ENCODE measurements at regions of chr1 and their contacts with region 1.

Region 1: DNA sequence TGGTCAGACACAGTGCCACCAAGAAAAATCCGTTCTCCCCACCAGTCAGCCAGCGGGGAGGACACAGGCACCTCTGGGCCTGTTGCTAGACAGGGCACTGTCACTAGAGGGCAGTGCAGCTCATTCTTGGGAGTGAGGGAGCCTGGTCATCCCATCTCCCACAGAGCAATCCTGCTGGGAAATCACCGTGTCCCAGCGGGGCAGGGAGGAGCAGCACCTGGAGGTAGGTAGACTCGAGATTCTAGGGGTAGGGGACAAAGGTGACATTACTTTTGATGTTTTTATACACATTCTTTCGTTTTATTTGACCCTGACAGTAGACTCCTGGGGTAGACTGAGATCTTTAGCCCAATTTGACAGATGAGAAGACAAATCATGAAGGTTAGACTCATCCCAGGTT is 6.7 kb upstream of the CAMK1G start:
- DNase-seq: peak; percentile 60 to 78
- H3K4me3 ChIP-seq: no peak overlapping the region
- H3K27ac ChIP-seq: no peak overlapping the region
- H3K4me1 ChIP-seq: no peaks in the 10 kb centered on the region
- H3K27me3 ChIP-seq: peaks cover 0 to 11% of the 10 kb centered on the region in 2 donors
- CTCF ChIP-seq: peak; percentile 74 to 91 (median 89)
- POLR2A ChIP-seq: no peak

Region 2: GRCh38 chr1:209307846-209308245 is 269.0 kb before region 1 on chr1:
- intact Hi-C with region 1: no loop called
- DNase-seq: no peak
- H3K4me3 ChIP-seq: no peak overlapping the region
- H3K27ac ChIP-seq: no peak overlapping the region
- H3K4me1 ChIP-seq: no peaks in the 10 kb centered on the region
- H3K27me3 ChIP-seq: peaks cover 0 to 4% of the 10 kb centered on the region in 2 donors
- CTCF ChIP-seq: no peak
- POLR2A ChIP-seq: no peak

Region 3: GRCh38 chr1:209513226-209513625 is 63.6 kb before region 1 on chr1:
- intact Hi-C with region 1: loop called (anchors 2 kb)
- DNase-seq: no peak
- H3K4me3 ChIP-seq: no peak overlapping the region
- H3K27ac ChIP-seq: no peak overlapping the region
- H3K4me1 ChIP-seq: no peaks in the 10 kb centered on the region
- H3K27me3 ChIP-seq: no peaks in the 10 kb centered on the region
- CTCF ChIP-seq: peak in 1 of 3 donors; percentile 14
- POLR2A ChIP-seq: no peak

Region 4: GRCh38 chr1:209646558-209646957 is 69.8 kb after region 1 on chr1:
- intact Hi-C with region 1: no loop called
- DNase-seq: no peak
- H3K4me3 ChIP-seq: peak overlapping the region in 1 of 3 donors; percentile 6
- H3K27ac ChIP-seq: peak overlapping the region; percentile 34 to 51
- H3K4me1 ChIP-seq: peaks cover 4 to 9% of the 10 kb centered on the region in 2 donors
- H3K27me3 ChIP-seq: no peaks in the 10 kb centered on the region
- CTCF ChIP-seq: no peak
- POLR2A ChIP-seq: no peak

Region 5: DNA sequence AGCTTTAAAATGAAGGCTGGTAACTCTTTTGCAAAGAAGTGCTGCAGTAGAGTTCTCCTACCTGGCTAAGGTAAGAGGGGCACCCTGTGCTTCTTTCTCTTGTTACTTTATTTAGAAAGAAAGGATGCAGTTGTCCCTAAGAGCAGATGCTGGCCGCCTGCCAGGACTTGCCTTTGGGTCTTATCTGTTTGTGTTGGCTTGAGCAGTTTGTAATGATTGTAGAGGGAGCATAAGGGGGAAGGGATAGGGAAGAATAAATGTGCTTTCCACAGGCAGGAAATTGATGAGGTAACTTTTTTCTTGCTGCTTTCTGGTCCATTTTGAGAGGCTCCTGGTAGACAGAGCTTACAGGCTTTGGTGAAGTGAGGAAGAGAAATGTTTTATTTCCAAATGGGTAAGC is 981.5 kb after region 1 on chr1:
- intact Hi-C with region 1: no loop called
- DNase-seq: no peak
- H3K4me3 ChIP-seq: no peak overlapping the region
- H3K27ac ChIP-seq: no peak overlapping the region
- H3K4me1 ChIP-seq: no peaks in the 10 kb centered on the region
- H3K27me3 ChIP-seq: no peaks in the 10 kb centered on the region
- CTCF ChIP-seq: no peak
- POLR2A ChIP-seq: no peak

Measured in breast epithelium (tissue), 4 donors.